ENCODE measurements at regions of chr1 and their contacts with region 1.

Region 1: GRCh38 chr1:154878371-154879022 is 8.4 kb upstream of the KCNN3 start:
- DNase-seq: peak; percentile 63
- H3K4me3 Mint-ChIP-seq: no peak overlapping the region
- H3K27ac Mint-ChIP-seq: no peak overlapping the region
- H3K4me1 Mint-ChIP-seq: peaks cover 9% of the 10 kb centered on the region
- H3K27me3 Mint-ChIP-seq: no peaks in the 10 kb centered on the region

Region 2: DNA sequence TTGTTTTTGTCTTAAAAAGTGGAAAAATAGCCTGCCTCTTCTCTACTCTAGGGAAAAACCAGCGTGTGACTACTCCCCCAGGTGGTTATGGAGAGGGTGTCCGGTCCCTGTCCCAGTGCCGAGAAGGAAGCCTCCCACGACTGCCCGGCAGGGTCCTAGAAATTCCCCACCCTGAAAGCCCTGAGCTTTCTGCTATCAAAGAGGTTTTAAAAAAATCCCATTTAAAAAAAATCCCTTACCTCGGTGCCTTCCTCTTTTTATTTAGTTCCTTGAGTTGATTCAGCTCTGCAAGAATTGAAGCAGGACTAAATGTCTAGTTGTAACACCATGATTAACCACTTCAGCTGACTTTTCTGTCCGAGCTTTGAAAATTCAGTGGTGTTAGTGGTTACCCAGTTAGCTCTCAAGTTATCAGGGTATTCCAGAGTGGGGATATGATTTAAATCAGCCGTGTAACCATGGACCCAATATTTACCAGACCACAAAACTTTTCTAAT is 411.5 kb before region 1 on chr1:
- intact Hi-C with region 1: no loop called
- DNase-seq: no peak
- H3K4me3 Mint-ChIP-seq: no peak overlapping the region
- H3K27ac Mint-ChIP-seq: no peak overlapping the region
- H3K4me1 Mint-ChIP-seq: peaks cover 46% of the 10 kb centered on the region
- H3K27me3 Mint-ChIP-seq: no peaks in the 10 kb centered on the region

Region 3: DNA sequence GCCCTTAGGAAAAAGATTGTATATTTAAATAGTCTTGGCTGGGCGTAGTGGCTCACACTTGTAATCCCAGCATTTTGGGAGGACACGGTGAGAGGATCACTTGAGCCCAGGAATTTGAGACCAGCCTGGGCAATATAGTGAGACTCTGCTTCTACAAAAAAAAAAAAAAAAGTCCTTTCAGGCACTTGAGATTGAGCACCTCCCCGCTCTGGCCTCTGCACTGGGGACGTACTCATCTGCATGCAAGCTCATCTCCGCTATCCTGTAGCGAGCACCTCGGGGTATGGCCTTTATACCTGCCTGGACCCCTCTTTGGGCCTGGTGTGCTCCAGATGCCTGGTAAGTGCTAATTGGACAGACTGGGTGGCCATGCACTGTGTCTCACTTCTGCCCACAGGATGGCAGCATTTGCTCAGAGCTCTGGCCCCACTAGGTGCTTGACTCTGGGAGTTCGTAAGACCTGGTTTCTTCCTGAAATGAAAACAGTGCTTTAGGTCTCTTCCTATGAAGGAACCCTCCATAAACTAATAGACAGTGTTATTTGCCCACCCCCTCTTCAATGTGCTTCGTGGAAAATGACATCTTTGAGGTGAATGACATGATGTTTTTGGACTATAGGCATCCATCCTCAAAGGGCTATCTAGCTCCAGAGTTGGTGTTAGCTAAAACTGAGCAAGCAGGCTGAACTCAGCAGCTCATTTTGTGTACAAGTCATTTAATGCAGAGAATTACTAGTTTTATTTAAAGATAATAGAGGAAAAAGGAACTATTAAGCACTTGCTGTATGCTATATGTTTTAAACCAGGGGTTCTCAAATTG is 208.8 kb before region 1 on chr1:
- intact Hi-C with region 1: loop called (anchors 1 kb)
- DNase-seq: peak; percentile 63
- H3K4me3 Mint-ChIP-seq: no peak overlapping the region
- H3K27ac Mint-ChIP-seq: no peak overlapping the region
- H3K4me1 Mint-ChIP-seq: peaks cover 9% of the 10 kb centered on the region
- H3K27me3 Mint-ChIP-seq: peaks cover 2% of the 10 kb centered on the region

Measured in activated T-helper 2 cell treated with anti-CD3 and anti-CD28 coated beads, Interferon-gamma antibody, Interleukin-2, Interleukin-4, amounts not matched to agents 10 μg/mL and 5 μg/mL and 100 μg/mL, durations not matched to agents 14 hours and 24 hours and 36 hours (primary cell).